ENCODE measurements at regions of chr1 and their contacts with region 1.

Region 1: DNA sequence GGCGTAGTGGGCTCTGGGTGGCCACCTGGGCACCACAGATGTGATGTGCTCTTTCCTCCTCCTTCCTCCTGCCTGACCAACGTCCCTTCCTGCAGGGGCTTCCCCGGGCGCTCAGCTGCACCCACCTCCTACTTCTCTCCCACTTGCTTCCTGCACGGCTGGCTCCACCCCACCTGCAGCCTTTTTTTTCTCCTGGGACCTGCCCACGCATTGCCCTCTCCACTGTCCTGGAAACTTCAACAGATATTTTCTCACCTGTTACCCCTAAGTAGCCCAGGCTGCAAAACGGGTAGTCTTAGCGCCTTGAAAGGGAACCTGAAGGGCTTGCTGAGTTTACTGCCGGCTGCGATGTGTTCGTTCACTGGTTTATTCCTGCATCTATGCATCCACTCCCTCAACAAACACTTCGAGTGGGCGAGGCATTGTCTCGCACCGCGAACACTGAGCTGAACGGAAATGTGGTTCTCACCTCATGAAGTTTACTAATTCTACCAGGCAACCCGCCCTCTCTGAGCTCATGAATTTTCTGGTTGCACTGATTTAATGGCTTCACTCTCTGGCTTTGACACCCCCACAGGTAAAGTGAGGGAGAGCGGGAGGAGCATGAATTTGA is 23.6 kb downstream of the ZBTB18 start:
- DNase-seq: no peak

Region 2: DNA sequence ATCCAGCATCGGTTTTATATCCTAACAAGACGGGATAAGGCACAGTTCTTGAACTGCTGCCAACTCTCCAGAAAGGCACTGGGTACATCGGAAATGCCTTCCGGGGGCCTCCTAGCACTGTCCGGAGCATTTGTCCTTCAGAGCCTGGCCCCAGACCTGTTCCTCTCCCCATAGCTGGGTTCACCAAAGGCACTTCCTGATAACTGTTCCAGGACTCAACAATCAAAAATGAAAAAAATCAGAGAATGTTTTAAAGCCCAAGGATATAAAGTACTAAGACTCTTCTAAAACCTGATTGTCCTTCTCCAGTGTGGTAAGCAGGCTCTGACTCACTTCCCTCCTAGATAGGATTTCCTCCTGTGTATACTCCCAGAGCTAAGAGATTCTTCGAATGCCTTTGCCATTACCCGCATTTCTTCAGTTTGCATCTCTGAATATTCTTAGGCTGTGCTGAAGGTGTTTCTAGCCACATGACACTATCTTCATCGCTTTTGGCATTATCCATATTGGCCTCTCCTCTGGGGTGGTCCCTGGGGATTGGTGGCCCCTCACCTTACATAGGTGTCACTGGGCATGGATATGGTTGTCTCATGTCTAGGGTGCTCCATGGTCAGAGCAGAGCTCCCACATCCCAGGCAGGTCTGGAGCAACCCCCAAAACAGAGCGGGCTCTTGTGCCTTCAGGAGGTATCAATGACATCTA is 89.3 kb after region 1 on chr1:
- intact Hi-C with region 1: no loop called
- DNase-seq: no peak

Region 3: GRCh38 chr1:244264163-244264562 is 189.5 kb after region 1 on chr1:
- intact Hi-C with region 1: loop called (anchors 5 kb)
- DNase-seq: no peak

Measured in head of caudate nucleus (tissue), 42 donors.